K562 (cell line): ENCODE measurements at regions of chr1 and their contacts with region 1.

Region 1: DNA sequence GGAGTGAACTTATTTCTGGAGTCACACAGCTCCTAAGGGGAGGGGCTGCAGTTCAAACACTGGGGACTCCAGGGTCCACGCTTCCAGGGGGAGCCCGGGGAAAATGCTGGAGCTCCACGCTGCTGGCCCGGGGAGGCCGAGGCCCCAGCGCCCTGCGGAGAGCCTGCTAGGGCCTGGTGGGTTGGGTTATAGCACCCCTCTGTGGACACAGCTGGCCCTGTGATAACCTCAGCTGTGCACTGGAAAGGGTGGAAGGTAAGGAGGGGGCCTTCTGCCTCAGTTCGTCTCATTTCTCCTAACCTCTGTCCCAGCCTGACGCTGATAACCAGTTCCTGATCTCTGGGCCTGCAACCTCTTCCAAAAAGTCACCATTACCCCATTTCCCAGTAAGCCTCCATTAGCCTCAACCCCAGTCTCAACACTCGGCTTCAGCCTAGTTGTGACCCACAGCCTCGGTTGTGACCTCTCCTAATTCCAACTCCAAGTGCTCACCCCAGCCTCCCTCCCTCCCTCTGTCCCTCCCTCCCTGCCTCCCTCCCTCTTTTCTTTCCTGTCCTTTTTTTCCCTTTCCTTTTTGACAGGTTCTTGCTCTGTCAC is 7.1 kb downstream of the NBL1 start:
- DNase-seq: peak; percentile 81 to 94 (median 84)
- ATAC-seq: peak; percentile 93
- H3K4me3 ChIP-seq: no peak overlapping the region
- H3K27ac ChIP-seq: no peak overlapping the region
- H3K4me1 ChIP-seq: peaks cover 15 to 23% of the 10 kb centered on the region in 2 experiments; a peak in 4 of 5 replicates
- H3K27me3 ChIP-seq: peaks cover 0 to 10% of the 10 kb centered on the region in 2 experiments; a peak in 2 of 5 replicates
- CTCF ChIP-seq: peak; percentile 93 to 97 (median 93)
- EP300 ChIP-seq: no peak
- POLR2A ChIP-seq: no peak
- RAD21 ChIP-seq: peak; percentile 91 to 98

Region 2: DNA sequence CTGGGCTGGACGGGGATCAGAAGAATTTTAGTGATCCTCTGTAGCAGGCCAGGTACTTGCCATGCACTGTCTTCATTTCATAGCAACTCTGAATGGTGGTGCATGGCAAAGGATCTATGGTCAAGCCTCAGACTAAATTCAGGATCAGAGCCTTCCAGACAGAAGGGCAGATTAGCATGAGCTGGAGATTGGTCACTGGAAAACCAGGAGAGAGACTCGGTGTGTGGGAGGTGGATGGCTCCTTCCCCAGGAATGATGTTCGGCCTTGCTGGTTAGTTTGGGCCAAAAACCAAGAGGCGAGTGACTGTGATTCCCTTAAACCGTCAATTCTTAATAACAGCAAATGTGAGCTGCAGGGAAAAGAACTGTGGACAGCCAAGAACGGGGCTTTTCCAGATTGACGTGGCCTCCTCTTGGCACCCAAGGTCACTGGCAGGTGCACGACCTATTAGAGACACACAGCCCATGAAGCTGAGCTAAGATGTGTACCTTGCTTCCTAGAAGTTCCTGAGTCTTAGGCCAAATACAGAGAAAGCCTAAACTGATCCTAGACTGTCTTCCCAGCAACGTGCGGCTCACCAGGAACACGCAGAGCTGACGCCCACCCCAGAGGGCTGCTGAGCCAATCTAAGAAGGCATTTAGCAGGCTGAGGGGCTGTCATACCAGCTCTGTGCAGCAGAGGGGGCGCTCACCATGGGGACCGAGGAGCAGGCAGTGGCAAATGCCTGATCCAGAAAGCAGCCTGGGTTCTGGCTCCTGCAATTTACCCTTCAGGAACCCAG is 767.4 kb before region 1 on chr1:
- CTCF ChIA-PET with region 1: interaction called, 5 read pairs
- POLR2A ChIA-PET with region 1: no interaction called
- in situ Hi-C with region 1: loop called (anchors 10 kb)
- intact Hi-C with region 1: no loop called
- DNase-seq: peak; percentile 79 to 82 (median 82)
- ATAC-seq: peak; percentile 94
- H3K4me3 ChIP-seq: no peak overlapping the region
- H3K27ac ChIP-seq: no peak overlapping the region
- H3K4me1 ChIP-seq: peaks cover 0 to 15% of the 10 kb centered on the region in 2 experiments; a peak in 1 of 5 replicates
- H3K27me3 ChIP-seq: no peaks in the 10 kb centered on the region
- CTCF ChIP-seq: peak; percentile 93 to 98 (median 97)
- EP300 ChIP-seq: no peak
- POLR2A ChIP-seq: no peak
- RAD21 ChIP-seq: peak; percentile 90 to 97

Region 3: GRCh38 chr1:19067182-19067911 is 583.9 kb before region 1 on chr1:
- CTCF ChIA-PET with region 1: no interaction called
- POLR2A ChIA-PET with region 1: no interaction called
- in situ Hi-C with region 1: loop called (anchors 10 kb)
- intact Hi-C with region 1: no loop called
- DNase-seq: no peak
- ATAC-seq: no peak
- H3K4me3 ChIP-seq: no peak overlapping the region
- H3K27ac ChIP-seq: no peak overlapping the region
- H3K4me1 ChIP-seq: peaks cover 0 to 29% of the 10 kb centered on the region in 2 experiments; a peak in 3 of 5 replicates
- H3K27me3 ChIP-seq: peaks cover 20 to 65% of the 10 kb centered on the region in 2 experiments; a peak in 4 of 5 replicates
- CTCF ChIP-seq: no peak
- EP300 ChIP-seq: no peak
- POLR2A ChIP-seq: no peak
- RAD21 ChIP-seq: no peak

Region 4: DNA sequence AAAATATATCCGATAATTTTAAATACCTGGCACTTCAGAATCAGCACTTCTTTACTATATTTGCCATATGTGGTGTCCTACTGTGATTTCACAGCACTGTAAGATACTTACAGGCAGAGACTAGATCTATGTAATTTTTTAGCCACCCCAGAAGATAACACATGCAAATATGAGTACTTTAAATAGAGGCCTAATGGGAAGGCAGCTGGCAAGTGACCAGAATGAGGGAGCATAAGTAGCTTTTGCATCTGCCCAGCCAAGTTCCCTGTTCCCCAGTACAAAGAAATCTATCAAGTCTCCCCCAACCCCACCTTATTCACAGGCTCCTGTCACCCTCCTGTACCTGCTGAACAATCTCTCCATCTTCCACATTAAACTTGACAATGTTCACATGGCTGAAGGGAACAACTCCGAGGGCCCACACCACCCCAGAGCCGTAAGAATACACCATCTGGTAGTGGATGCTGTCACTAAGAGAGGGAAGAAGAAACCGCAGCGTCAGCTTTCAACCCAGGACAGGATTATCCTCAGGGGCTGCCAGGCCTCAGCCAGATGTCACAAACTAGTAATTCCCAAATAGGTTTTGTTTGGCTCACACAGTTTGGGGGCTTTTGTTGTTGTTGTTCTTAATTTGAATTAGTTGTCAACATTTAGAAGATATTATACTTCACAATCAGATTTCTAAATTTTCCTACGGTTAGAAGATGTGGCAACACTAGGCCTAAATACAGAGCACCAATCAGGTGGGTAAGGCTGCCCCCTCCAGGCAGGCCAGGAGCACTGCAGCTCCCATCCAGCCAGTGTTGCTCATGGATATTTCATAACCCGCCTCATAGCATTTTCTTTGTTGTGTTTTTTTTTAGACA is 410.3 kb before region 1 on chr1:
- CTCF ChIA-PET with region 1: no interaction called
- POLR2A ChIA-PET with region 1: no interaction called
- in situ Hi-C with region 1: loop called (anchors 10 kb)
- intact Hi-C with region 1: no loop called
- DNase-seq: peak; percentile 74 to 86 (median 76)
- ATAC-seq: peak; percentile 96
- H3K4me3 ChIP-seq: no peak overlapping the region
- H3K27ac ChIP-seq: no peak overlapping the region
- H3K4me1 ChIP-seq: no peaks in the 10 kb centered on the region; a peak in 1 of 5 replicates
- H3K27me3 ChIP-seq: no peaks in the 10 kb centered on the region
- CTCF ChIP-seq: peak; percentile 79 to 96 (median 90)
- EP300 ChIP-seq: no peak
- POLR2A ChIP-seq: no peak
- RAD21 ChIP-seq: peak; percentile 77 to 83

Region 5: GRCh38 chr1:19341201-19342072 is 309.8 kb before region 1 on chr1:
- CTCF ChIA-PET with region 1: interaction called, 29 read pairs
- POLR2A ChIA-PET with region 1: interaction called, 4 read pairs
- in situ Hi-C with region 1: loop called (anchors 5 kb)
- intact Hi-C with region 1: loop called (anchors 1 kb)
- DNase-seq: peak; percentile 90 to 92 (median 91)
- ATAC-seq: peak; percentile 88
- H3K4me3 ChIP-seq: no peak overlapping the region
- H3K27ac ChIP-seq: peak overlapping the region; percentile 6; the same call in 1 of the 3 replicates
- H3K4me1 ChIP-seq: peaks cover 4 to 52% of the 10 kb centered on the region in 2 experiments; a peak in 4 of 5 replicates
- H3K27me3 ChIP-seq: no peaks in the 10 kb centered on the region
- CTCF ChIP-seq: peak; percentile 91 to 99 (median 96)
- EP300 ChIP-seq: no peak
- POLR2A ChIP-seq: no peak
- RAD21 ChIP-seq: peak; percentile 42 to 72

Region 6: DNA sequence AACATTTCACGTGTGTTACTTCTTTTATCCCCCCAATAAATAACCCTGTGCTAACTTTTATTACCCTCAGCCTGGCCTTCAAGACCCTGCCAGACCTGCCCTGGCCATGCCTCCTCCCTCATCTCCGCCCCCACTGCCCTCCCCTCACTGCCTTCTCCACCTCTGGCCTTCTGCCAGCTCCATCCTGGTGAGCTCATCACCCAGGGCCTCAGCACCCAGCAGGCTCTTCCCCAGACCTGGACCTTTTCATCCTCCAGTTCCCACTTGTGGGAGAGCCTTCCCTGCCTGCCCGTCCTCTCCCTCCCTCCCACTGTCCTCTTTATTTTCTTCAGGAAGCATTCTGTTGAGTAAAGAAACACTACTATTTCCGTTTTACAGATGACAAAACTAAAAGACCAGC is 267.1 kb before region 1 on chr1:
- CTCF ChIA-PET with region 1: no interaction called
- POLR2A ChIA-PET with region 1: no interaction called
- in situ Hi-C with region 1: no loop called
- intact Hi-C with region 1: no loop called
- DNase-seq: peak; percentile 54 to 59 (median 56)
- ATAC-seq: peak; percentile 79
- H3K4me3 ChIP-seq: no peak overlapping the region
- H3K27ac ChIP-seq: no peak overlapping the region
- H3K4me1 ChIP-seq: peaks cover 0 to 3% of the 10 kb centered on the region in 2 experiments; a peak in 1 of 5 replicates
- H3K27me3 ChIP-seq: no peaks in the 10 kb centered on the region
- CTCF ChIP-seq: no peak
- EP300 ChIP-seq: no peak
- POLR2A ChIP-seq: no peak
- RAD21 ChIP-seq: no peak